ENCODE measurements at regions of chr14 and their contacts with region 1.

Region 1: DNA sequence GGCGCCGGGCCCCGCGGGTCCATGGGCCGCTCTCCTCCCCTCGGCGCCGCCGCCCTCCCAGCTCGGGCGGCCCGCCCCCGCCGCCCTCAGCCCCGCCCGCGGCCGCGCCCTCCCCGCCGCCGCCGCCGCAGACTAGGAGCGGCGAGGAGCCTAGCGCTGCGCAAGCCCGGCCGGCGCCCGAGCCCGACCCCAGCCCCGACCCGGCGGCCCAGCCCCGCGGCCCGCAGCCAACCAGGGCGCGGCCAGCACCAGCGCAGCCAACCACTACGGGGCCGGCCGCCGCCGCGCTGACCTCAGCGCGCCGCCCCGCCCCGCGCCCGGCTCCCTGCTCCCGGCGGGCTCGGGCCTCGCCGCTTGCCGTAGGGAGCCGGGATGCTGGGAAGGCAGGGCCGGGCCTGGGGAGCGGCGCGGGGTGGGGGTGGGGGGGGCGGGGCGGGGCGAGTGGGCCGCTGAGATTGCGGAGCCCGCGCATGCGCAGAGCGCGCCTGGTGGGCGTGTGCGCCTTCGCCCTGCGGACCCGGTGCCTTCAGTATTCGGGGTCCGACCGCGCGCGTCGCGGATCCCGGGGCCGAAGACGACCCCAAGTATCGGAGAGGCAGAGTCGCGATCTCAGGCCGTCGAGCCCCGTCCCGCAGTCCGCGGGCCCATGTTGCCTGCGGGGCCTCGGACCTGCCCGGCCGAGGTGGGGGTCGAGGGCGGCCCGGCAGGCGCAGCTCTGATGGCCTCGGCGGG is at the start of gene CDC42BPB:
- DNase-seq: peak; percentile 89
- H3K4me3 ChIP-seq: peak within 1 kb of the TSS; percentile 93 to 96 (median 95)
- H3K27ac ChIP-seq: peak within 1 kb of the TSS; percentile 91
- H3K4me1 ChIP-seq: peaks cover 22% of the 10 kb centered on the region
- H3K27me3 ChIP-seq: no peaks in the 10 kb centered on the region
- CTCF ChIP-seq: no peak
- POLR2A ChIP-seq: no peak
- total RNA-seq, gene CDC42BPB: 131 and 136 TPM in 2 replicates

Region 2: DNA sequence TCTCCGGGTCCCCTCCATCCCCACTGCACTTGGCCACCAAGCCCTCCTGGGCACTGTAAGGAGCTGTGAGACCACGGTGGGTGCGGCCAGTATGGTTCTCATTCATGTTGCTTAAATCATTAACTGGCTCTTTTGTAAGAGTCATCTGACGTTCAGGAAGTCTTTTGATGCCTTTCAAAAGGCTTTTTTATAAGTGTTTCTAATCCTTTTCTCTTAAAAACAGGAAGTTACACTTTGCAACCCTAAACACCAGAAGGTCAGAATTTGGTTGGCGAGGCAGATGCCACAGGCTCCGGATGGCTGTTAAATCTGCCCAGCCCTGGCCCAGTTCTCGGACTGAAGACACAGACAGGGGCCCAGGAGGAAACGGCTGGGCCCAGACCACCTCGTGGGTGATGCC is 1522.3 kb before region 1 on chr14:
- CTCF ChIA-PET with region 1: no interaction called
- POLR2A ChIA-PET with region 1: no interaction called
- dilution Hi-C with region 1: no loop called
- intact Hi-C with region 1: no loop called
- DNase-seq: no peak
- H3K4me3 ChIP-seq: no peak overlapping the region
- H3K27ac ChIP-seq: no peak overlapping the region
- H3K4me1 ChIP-seq: no peaks in the 10 kb centered on the region
- H3K27me3 ChIP-seq: no peaks in the 10 kb centered on the region
- CTCF ChIP-seq: no peak
- POLR2A ChIP-seq: no peak

Region 3: DNA sequence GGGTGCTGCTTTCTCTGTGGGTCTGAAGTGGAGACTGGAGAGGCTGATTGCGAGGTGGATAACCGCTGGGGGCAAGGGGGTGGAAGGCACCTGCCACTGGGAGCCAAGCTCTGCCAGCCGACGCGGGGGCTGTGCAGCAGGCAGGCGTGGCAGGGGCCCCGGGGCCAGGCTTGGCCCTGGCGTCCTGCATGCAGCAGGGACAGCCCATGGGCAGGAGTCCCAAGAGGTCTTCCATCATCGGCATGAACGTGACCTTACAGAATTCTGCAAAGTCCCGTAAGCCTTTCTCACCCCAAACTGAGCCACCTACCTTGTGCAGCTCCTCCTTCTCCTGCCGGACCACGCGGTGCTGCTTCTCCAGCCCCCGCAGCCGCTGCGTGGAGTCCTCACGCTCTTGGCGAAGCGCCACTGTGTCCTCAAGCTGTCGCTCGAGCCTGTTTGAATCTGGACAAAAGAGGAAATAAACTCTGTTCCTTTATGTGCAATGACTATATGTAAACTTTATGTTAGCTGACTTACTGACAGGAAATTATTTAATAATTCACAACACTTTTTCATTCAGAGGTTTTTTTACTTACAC is 83.7 kb before region 1 on chr14:
- CTCF ChIA-PET with region 1: interaction called, 6 read pairs
- POLR2A ChIA-PET with region 1: no interaction called
- dilution Hi-C with region 1: no loop called
- intact Hi-C with region 1: loop called (anchors 5 kb)
- DNase-seq: no peak
- H3K4me3 ChIP-seq: no peak overlapping the region
- H3K27ac ChIP-seq: no peak overlapping the region
- H3K4me1 ChIP-seq: no peaks in the 10 kb centered on the region
- H3K27me3 ChIP-seq: no peaks in the 10 kb centered on the region
- CTCF ChIP-seq: no peak
- POLR2A ChIP-seq: no peak

Region 4: DNA sequence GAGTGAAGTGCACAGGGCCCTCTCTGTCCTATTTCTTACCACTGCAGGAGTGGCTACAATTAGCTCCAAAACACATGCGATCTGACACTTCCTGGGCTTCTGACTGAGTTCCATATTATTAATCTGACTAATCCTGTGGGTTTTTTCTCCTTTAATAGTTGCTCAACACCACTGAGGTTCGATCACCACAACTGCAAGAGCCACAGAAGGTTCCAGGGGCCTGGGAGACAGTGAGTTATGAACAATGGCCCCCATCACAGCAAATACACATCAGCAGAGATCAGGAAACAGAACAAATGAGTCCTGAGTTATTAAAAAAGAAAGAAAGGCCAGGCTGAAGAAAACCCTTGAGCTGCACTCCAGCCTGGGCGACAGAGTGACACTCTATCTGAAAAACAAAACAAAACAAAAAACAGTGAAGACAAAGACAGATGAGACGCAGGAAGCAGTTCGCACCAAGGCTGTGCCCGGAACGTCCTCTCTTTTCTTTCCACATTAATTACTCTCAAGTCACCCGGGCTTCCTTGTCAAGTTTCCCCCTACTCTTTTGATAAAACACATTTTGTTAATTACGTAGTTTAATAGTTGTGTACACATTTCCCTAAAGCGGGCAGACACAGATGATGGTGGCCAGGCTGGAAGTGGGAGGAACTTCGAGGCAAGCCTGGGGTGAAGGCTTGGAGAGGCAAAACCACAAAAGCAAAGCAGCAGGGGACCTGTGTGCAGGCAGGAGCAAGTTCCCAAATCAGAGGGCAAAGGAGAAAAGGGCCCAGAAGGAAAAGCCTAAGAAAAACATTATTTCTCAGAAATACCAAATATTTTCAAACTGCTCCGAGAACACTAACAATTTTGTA is 42.8 kb before region 1 on chr14:
- CTCF ChIA-PET with region 1: no interaction called
- POLR2A ChIA-PET with region 1: interaction called, 8 read pairs
- dilution Hi-C with region 1: no loop called
- intact Hi-C with region 1: loop called (anchors 2 kb)
- DNase-seq: peak; percentile 36
- H3K4me3 ChIP-seq: peak overlapping the region in 1 of 3 experiments; percentile 15
- H3K27ac ChIP-seq: peak overlapping the region; percentile 61
- H3K4me1 ChIP-seq: peaks cover 36% of the 10 kb centered on the region
- H3K27me3 ChIP-seq: no peaks in the 10 kb centered on the region
- CTCF ChIP-seq: no peak
- POLR2A ChIP-seq: no peak

Region 5: DNA sequence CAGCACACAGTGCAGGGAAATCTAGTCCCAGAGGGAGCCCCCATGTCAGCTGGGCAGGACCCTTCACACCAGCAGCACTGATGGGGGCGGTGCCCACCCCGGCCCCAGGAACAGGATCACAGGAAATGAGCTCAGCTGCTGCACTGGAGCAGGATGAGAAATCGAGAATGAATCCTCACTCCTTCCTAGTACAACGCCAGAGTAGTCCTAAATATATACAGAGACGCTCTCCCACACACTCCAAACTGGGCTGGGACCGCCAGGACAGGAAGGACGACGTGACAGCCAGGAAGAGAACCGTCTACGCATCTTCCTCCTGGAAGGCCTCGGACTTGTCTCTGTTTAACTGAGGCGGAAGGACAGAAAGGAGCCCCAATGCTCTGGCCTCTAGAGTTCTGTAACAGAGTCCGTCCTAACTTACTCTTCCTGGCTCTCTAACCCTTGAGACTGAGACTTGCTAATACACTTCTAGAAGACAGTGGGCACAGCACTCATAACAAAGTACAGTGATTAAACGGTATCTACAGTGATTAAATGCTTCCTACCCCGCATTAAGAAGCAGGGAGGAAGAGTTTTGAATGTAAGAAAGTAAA is 33.6 kb before region 1 on chr14:
- CTCF ChIA-PET with region 1: no interaction called
- POLR2A ChIA-PET with region 1: interaction called, 3 read pairs
- dilution Hi-C with region 1: no loop called
- intact Hi-C with region 1: loop called (anchors 1 kb)
- DNase-seq: peak; percentile 80
- H3K4me3 ChIP-seq: peak overlapping the region; percentile 10 to 61 (median 11)
- H3K27ac ChIP-seq: peak overlapping the region; percentile 96
- H3K4me1 ChIP-seq: peaks cover 31% of the 10 kb centered on the region
- H3K27me3 ChIP-seq: no peaks in the 10 kb centered on the region
- CTCF ChIP-seq: no peak
- POLR2A ChIP-seq: no peak